ENCODE measurements at regions of chr3 and their contacts with region 1.

Region 1: GRCh38 chr3:157136647-157137387 is 23.1 kb downstream of the CCNL1 start:
- DNase-seq: no peak
- ATAC-seq: peak; percentile 10 to 60 (median 20)
- H3K4me3 ChIP-seq: no peak overlapping the region
- H3K27ac ChIP-seq: peak overlapping the region; percentile 19 to 71 (median 56)
- H3K4me1 ChIP-seq: peaks cover 3 to 57% (median 36%) of the 10 kb centered on the region in 12 donors
- H3K27me3 ChIP-seq: no peaks in the 10 kb centered on the region
- CTCF ChIP-seq: no peak
- POLR2A ChIP-seq: no peak

Region 2: DNA sequence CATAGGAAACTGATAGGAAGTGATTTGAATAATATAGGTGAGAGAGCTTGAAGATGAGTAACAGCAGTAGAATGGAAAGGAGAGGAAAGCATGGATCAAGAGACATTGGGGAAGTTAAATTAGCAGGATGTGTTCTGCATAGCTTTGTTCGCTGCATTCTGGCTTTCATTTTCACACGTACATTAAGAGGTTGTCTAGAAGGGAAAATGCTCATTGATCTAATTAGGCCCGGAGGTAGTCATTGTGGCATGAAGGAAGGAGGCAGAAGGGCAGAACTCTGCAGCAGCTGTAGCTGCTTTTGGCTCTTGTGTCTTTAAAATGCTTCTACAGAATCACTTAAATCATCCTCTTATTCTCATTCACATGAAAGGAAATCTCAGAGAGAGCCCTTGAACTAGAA is 976.2 kb before region 1 on chr3:
- intact Hi-C with region 1: loop called in 1 of 10 experiments (anchors 5 kb)
- DNase-seq: no peak
- ATAC-seq: no peak
- H3K4me3 ChIP-seq: no peak overlapping the region
- H3K27ac ChIP-seq: no peak overlapping the region
- H3K4me1 ChIP-seq: peaks cover 0 to 5% (median 0%) of the 10 kb centered on the region in 12 donors
- H3K27me3 ChIP-seq: no peaks in the 10 kb centered on the region
- CTCF ChIP-seq: no peak
- POLR2A ChIP-seq: no peak

Region 3: GRCh38 chr3:156535162-156535627 is 601.6 kb before region 1 on chr3:
- intact Hi-C with region 1: loop called in 9 of 10 experiments (anchors 5 to 10 kb)
- DNase-seq: peak in 4 of 5 donors; percentile 58 to 89 (median 74)
- ATAC-seq: peak; percentile 81 to 96 (median 94)
- H3K4me3 ChIP-seq: no peak overlapping the region
- H3K27ac ChIP-seq: peak overlapping the region; percentile 16 to 84 (median 68)
- H3K4me1 ChIP-seq: peaks cover 0 to 31% (median 15%) of the 10 kb centered on the region in 12 donors
- H3K27me3 ChIP-seq: no peaks in the 10 kb centered on the region
- CTCF ChIP-seq: peak in 7 of 12 donors; percentile 12 to 46 (median 37)
- POLR2A ChIP-seq: no peak

Region 4: GRCh38 chr3:156547637-156548036 is 589.2 kb before region 1 on chr3:
- intact Hi-C with region 1: loop called in 6 of 10 experiments (anchors 5 to 10 kb)
- DNase-seq: peak in 1 of 5 donors; percentile 45
- ATAC-seq: peak; percentile 49 to 78 (median 61)
- H3K4me3 ChIP-seq: no peak overlapping the region
- H3K27ac ChIP-seq: peak overlapping the region; percentile 35 to 80 (median 58)
- H3K4me1 ChIP-seq: peaks cover 8 to 99% (median 74%) of the 10 kb centered on the region in 12 donors
- H3K27me3 ChIP-seq: no peaks in the 10 kb centered on the region
- CTCF ChIP-seq: no peak
- POLR2A ChIP-seq: no peak

Region 5: GRCh38 chr3:156674046-156674910 is 462.5 kb before region 1 on chr3 and contains the start of gene TIPARP:
- intact Hi-C with region 1: loop called (anchors 1 to 5 kb)
- DNase-seq: peak; percentile 99 to 100 (median 100)
- ATAC-seq: peak; percentile 92 to 98 (median 96)
- H3K4me3 ChIP-seq: peak within 1 kb of the TSS; percentile 66 to 97 (median 80)
- H3K27ac ChIP-seq: peak within 1 kb of the TSS; percentile 88 to 99 (median 96)
- H3K4me1 ChIP-seq: peaks cover 0 to 51% (median 29%) of the 10 kb centered on the region in 12 donors
- H3K27me3 ChIP-seq: no peaks in the 10 kb centered on the region
- CTCF ChIP-seq: peak; percentile 55 to 88 (median 77)
- POLR2A ChIP-seq: peak; percentile 81 to 99
- total RNA-seq, gene TIPARP: 17.8 to 46.8 (median 33.8) TPM

Region 6: GRCh38 chr3:156795890-156796481 is 340.8 kb before region 1 on chr3:
- intact Hi-C with region 1: no loop called
- DNase-seq: no peak
- ATAC-seq: no peak
- H3K4me3 ChIP-seq: no peak overlapping the region
- H3K27ac ChIP-seq: no peak overlapping the region
- H3K4me1 ChIP-seq: peaks cover 0 to 27% (median 0%) of the 10 kb centered on the region in 12 donors
- H3K27me3 ChIP-seq: no peaks in the 10 kb centered on the region
- CTCF ChIP-seq: no peak
- POLR2A ChIP-seq: no peak

Region 7: GRCh38 chr3:156816800-156817645 is 319.8 kb before region 1 on chr3:
- intact Hi-C with region 1: loop called in 7 of 10 experiments (anchors 5 to 10 kb)
- DNase-seq: peak; percentile 82 to 93 (median 88)
- ATAC-seq: peak; percentile 83 to 94 (median 90)
- H3K4me3 ChIP-seq: peak overlapping the region; percentile 40 to 76 (median 66)
- H3K27ac ChIP-seq: peak overlapping the region; percentile 51 to 93 (median 84)
- H3K4me1 ChIP-seq: peaks cover 0 to 32% (median 12%) of the 10 kb centered on the region in 12 donors
- H3K27me3 ChIP-seq: no peaks in the 10 kb centered on the region
- CTCF ChIP-seq: peak in 3 of 12 donors; percentile 23 to 31 (median 25)
- POLR2A ChIP-seq: peak in 1 of 2 donors; percentile 58

Region 8: GRCh38 chr3:156826144-156826895 is 310.5 kb before region 1 on chr3 and contains the start of gene LEKR1:
- intact Hi-C with region 1: loop called in 7 of 10 experiments (anchors 5 to 10 kb)
- DNase-seq: peak; percentile 89 to 93 (median 91)
- ATAC-seq: peak; percentile 85 to 98 (median 96)
- H3K4me3 ChIP-seq: peak within 1 kb of the TSS; percentile 56 to 94 (median 67)
- H3K27ac ChIP-seq: peak within 1 kb of the TSS; percentile 83 to 96 (median 89)
- H3K4me1 ChIP-seq: peaks cover 0 to 17% (median 6%) of the 10 kb centered on the region in 12 donors
- H3K27me3 ChIP-seq: no peaks in the 10 kb centered on the region
- CTCF ChIP-seq: peak in 1 of 12 donors; percentile 4
- POLR2A ChIP-seq: peak; percentile 14 to 72
- total RNA-seq, gene LEKR1: 0.23 to 1.8 (median 1.0) TPM in 8 of 9 donors, not detected in the other